Activated naive CD4-positive, alpha-beta T cell treated with anti-CD3 and anti-CD28 coated beads for 36 hours (primary cell): ENCODE measurements at regions of chr13 and their contacts with region 1.

Region 1: DNA sequence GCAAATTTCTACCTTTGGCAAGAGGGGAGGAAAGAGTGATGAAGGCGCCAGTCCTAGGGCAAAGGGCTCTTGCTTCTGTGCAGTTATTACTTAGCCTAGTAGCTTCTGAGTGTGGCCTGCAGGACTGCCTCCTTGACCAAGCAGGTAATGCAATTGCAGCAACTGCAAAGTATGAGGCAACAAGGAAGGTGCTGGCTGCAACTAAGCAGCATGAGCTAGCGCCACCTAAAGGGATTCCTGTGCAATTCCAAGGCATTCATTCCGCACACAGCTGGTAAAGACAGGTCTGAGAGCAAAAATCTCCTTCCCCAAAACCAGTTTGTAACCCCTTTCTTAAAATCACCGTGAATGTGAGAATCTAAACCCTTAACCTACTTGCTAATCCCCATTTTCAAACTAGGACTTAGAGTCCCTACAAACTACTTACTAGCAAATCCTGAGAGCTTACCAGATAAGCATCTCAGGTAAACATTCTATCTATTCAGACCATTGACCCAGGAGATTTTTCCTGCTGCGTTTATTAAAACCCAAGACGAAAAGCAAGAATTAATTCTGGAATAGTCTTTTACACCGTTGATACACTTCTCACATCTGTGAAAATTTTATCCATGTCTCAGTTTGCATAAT is 62.9 kb downstream of the DCT start:
- DNase-seq: no peak
- H3K4me3 Mint-ChIP-seq: no peak overlapping the region
- H3K27ac Mint-ChIP-seq: no peak overlapping the region
- H3K4me1 Mint-ChIP-seq: peaks cover 49% of the 10 kb centered on the region
- H3K27me3 Mint-ChIP-seq: no peaks in the 10 kb centered on the region

Region 2: DNA sequence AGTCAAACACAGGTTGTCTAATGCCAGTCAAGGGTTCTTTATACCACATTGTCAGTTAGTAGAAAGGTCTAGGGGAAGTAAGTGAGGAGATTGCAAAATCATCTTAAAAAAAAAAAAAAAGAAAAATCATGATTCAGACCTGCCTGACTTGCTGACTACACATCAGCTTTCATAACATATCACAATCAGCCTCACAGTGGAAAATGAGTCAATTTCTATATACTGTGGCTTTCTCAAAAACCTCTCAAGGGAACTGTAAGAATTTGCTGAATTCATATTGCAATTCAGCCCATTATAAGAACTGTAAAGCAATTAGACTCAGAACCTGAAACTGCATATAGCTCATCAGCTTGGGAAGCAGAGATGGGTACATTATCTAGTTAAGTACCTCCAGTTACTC is 1265.3 kb before region 1 on chr13:
- CTCF ChIA-PET with region 1: no interaction called
- intact Hi-C with region 1: loop called (anchors 1 kb)
- DNase-seq: no peak
- H3K4me3 Mint-ChIP-seq: no peak overlapping the region
- H3K27ac Mint-ChIP-seq: no peak overlapping the region
- H3K4me1 Mint-ChIP-seq: no peaks in the 10 kb centered on the region
- H3K27me3 Mint-ChIP-seq: peaks cover 3% of the 10 kb centered on the region

Region 3: DNA sequence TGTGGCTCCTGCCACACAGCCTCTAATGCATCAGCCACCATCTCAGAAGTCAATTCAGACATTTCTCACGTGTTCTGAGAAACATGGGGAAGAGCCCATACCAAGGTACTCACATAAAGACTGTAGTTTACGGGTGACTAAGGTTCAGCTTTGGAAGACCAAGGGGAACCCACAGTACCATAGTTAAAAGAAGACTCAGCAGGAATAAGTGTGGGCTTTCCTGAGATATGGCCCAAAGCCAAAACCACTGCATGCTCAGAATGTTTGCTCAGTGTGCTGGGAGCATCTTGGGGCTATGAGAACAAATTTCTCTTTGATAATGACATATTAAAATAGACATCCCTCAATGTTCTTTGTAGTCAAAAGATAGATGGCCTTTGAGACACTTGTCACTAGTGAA is 220.9 kb before region 1 on chr13:
- CTCF ChIA-PET with region 1: no interaction called
- intact Hi-C with region 1: no loop called
- DNase-seq: no peak
- H3K4me3 Mint-ChIP-seq: no peak overlapping the region
- H3K27ac Mint-ChIP-seq: no peak overlapping the region
- H3K4me1 Mint-ChIP-seq: no peaks in the 10 kb centered on the region
- H3K27me3 Mint-ChIP-seq: peaks cover 3% of the 10 kb centered on the region

Region 4: GRCh38 chr13:94239135-94239534 is 177.4 kb before region 1 on chr13:
- CTCF ChIA-PET with region 1: no interaction called
- intact Hi-C with region 1: loop called (anchors 1 kb)
- DNase-seq: peak; percentile 33
- H3K4me3 Mint-ChIP-seq: no peak overlapping the region
- H3K27ac Mint-ChIP-seq: no peak overlapping the region
- H3K4me1 Mint-ChIP-seq: peaks cover 44% of the 10 kb centered on the region
- H3K27me3 Mint-ChIP-seq: no peaks in the 10 kb centered on the region

Region 5: DNA sequence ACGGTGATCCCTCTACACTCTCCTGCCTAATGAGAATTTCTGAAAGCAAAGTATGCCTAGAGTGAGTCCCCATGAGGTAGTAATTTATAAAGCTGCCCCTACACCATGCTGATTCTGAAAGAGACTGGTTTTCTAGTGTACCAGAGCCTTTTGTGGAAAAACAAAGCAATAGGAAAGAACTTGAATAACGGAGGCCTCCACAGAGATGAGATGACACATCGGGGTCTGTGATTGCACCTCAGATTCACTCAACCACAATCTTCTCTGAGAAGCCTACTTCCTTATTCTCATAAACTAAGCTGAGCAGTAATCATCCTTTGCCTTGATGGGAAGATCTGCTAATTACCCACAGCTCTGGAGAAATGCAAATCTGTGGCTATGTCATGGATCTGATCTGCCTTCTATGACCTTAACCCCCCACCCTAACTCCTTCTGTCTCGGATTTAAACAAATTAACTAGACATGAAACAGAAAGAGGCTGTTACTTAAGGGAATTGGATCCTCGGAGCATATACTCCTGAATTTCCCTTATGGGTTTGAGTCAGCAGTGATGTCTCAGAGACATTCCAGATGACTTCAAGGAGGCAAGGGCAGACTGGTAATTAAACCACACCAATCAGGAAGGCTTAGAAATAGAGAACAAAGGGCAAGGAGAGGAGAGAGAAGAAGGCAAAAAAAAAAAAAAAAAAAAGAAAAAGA is 65.1 kb before region 1 on chr13:
- CTCF ChIA-PET with region 1: interaction called, 3 read pairs
- intact Hi-C with region 1: loop called (anchors 1 kb)
- DNase-seq: peak; percentile 38
- H3K4me3 Mint-ChIP-seq: no peak overlapping the region
- H3K27ac Mint-ChIP-seq: no peak overlapping the region
- H3K4me1 Mint-ChIP-seq: peaks cover 30% of the 10 kb centered on the region
- H3K27me3 Mint-ChIP-seq: peaks cover 4% of the 10 kb centered on the region

Region 6: GRCh38 chr13:94549232-94550061 is 132.9 kb after region 1 on chr13:
- CTCF ChIA-PET with region 1: no interaction called
- intact Hi-C with region 1: loop called (anchors 1 kb)
- DNase-seq: peak; percentile 93
- H3K4me3 Mint-ChIP-seq: peak overlapping the region; percentile 75
- H3K27ac Mint-ChIP-seq: peak overlapping the region; percentile 88
- H3K4me1 Mint-ChIP-seq: peaks cover 5% of the 10 kb centered on the region
- H3K27me3 Mint-ChIP-seq: peaks cover 3% of the 10 kb centered on the region

Region 7: GRCh38 chr13:94660695-94661326 is 244.2 kb after region 1 on chr13:
- CTCF ChIA-PET with region 1: no interaction called
- intact Hi-C with region 1: loop called (anchors 1 kb)
- DNase-seq: peak; percentile 58
- H3K4me3 Mint-ChIP-seq: no peak overlapping the region
- H3K27ac Mint-ChIP-seq: no peak overlapping the region
- H3K4me1 Mint-ChIP-seq: peaks cover 37% of the 10 kb centered on the region
- H3K27me3 Mint-ChIP-seq: peaks cover 16% of the 10 kb centered on the region

Region 8: GRCh38 chr13:94864474-94864873 is 447.9 kb after region 1 on chr13:
- CTCF ChIA-PET with region 1: no interaction called
- intact Hi-C with region 1: no loop called
- DNase-seq: no peak
- H3K4me3 Mint-ChIP-seq: no peak overlapping the region
- H3K27ac Mint-ChIP-seq: no peak overlapping the region
- H3K4me1 Mint-ChIP-seq: peaks cover 8% of the 10 kb centered on the region
- H3K27me3 Mint-ChIP-seq: no peaks in the 10 kb centered on the region

Region 9: DNA sequence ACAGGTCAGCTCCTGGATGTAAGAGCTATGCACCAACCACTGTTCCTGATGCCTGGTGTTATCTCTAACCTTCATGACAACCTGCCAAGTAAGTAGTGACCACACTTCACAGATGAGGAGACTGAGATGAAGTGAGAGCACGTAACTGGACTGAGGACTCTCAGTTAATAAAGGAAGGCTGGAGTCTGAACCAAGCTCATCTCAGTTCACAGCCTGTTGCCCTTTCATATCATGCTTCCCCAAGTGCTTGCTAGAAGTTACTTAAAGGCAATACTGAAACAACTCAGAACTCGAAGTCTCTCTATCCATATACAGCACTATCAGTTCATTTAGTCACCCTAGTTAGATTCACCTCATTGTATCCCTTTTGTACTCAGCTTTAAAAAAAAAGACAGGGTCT is 765.0 kb after region 1 on chr13:
- CTCF ChIA-PET with region 1: no interaction called
- intact Hi-C with region 1: loop called (anchors 1 kb)
- DNase-seq: no peak
- H3K4me3 Mint-ChIP-seq: no peak overlapping the region
- H3K27ac Mint-ChIP-seq: peak overlapping the region; percentile 38
- H3K4me1 Mint-ChIP-seq: peaks cover 65% of the 10 kb centered on the region
- H3K27me3 Mint-ChIP-seq: no peaks in the 10 kb centered on the region